PC-9 (cell line): ENCODE measurements at regions of chr20 and their contacts with region 1.

Region 1: DNA sequence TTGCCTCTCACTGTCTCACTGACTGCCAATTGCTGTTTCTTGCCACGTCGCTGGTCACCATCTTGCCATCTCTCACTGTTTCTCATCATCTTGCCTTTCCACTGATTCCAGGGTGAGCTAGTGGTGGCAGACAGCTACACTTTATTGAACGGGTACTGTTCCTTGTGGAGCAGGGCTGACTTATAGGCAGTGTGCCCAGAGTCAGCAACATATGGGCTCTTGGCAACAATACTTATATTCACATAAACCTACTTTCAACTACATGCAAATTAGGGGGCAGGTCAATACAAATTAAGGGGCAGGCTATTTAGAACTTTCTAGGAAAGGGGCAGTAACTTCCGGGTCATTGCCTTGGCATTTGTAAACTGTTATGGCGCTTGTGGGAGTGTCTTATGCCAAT is 186.2 kb upstream of the SYNDIG1 start:
- DNase-seq: no peak
- H3K4me3 ChIP-seq: no peak overlapping the region
- H3K27ac ChIP-seq: no peak overlapping the region
- H3K4me1 ChIP-seq: no peaks in the 10 kb centered on the region
- H3K27me3 ChIP-seq: no peaks in the 10 kb centered on the region
- CTCF ChIP-seq: no peak

Region 2: DNA sequence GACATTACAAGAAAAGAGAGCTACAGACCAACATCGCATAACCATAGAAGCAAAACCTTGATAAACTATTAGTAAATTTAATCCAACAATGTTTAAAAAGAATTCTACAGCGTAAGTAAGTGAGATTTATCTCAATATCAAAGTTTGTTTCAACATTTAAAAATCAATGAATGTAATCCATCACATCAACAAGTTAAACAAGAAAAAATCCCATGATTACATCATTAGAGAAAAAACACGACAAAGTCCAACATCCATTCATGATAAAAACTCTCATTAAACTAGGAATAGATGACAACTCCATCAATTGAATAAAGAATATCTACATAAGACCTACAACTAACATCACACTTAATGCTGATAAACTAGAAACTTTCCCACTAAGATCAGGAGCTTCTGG is 55.6 kb before region 1 on chr20:
- CTCF ChIA-PET with region 1: no interaction called
- POLR2A ChIA-PET with region 1: no interaction called
- intact Hi-C with region 1: no loop called
- DNase-seq: no peak
- H3K4me3 ChIP-seq: no peak overlapping the region
- H3K27ac ChIP-seq: no peak overlapping the region
- H3K4me1 ChIP-seq: no peaks in the 10 kb centered on the region
- H3K27me3 ChIP-seq: no peaks in the 10 kb centered on the region
- CTCF ChIP-seq: no peak

Region 3: GRCh38 chr20:24477601-24478547 is 194.7 kb after region 1 on chr20:
- CTCF ChIA-PET with region 1: no interaction called
- POLR2A ChIA-PET with region 1: interaction called, 11 read pairs
- intact Hi-C with region 1: no loop called
- DNase-seq: no peak
- H3K4me3 ChIP-seq: no peak overlapping the region
- H3K27ac ChIP-seq: no peak overlapping the region
- H3K4me1 ChIP-seq: no peaks in the 10 kb centered on the region
- H3K27me3 ChIP-seq: no peaks in the 10 kb centered on the region
- CTCF ChIP-seq: no peak

Region 4: DNA sequence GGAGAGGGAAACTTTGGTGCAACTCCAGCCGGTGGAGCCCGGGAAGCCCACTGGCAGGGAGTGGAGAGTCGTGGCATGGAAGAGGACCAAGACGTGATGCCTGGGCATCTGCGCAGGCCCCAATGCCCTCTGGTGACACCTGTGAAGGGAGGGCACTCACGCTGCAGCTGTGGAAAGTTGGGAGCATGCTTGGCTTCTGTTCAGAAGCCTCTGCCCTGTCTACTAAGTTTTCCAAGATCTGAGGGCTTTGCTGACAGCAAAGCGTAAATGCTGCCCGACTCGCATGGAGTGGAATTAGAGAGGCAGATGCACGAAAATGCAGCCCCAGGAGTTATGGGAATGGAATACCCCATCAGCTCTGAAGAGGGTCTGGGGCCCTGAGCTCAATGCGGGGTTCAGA is 262.0 kb after region 1 on chr20:
- CTCF ChIA-PET with region 1: no interaction called
- POLR2A ChIA-PET with region 1: no interaction called
- intact Hi-C with region 1: no loop called
- DNase-seq: no peak
- H3K4me3 ChIP-seq: no peak overlapping the region
- H3K27ac ChIP-seq: no peak overlapping the region
- H3K4me1 ChIP-seq: no peaks in the 10 kb centered on the region
- H3K27me3 ChIP-seq: no peaks in the 10 kb centered on the region
- CTCF ChIP-seq: no peak

Region 5: GRCh38 chr20:25223179-25223661 is 940.0 kb after region 1 on chr20:
- CTCF ChIA-PET with region 1: no interaction called
- POLR2A ChIA-PET with region 1: no interaction called
- intact Hi-C with region 1: no loop called
- DNase-seq: peak; percentile 92 to 98
- H3K4me3 ChIP-seq: peak overlapping the region; percentile 20; the same call in 1 of the 2 replicates
- H3K27ac ChIP-seq: peak overlapping the region; percentile 97
- H3K4me1 ChIP-seq: peaks cover 52% of the 10 kb centered on the region
- H3K27me3 ChIP-seq: no peaks in the 10 kb centered on the region
- CTCF ChIP-seq: peak; percentile 45; the same call in 1 of the 2 replicates